Prostate gland (tissue), 2 donors: ENCODE measurements at regions of chr9 and their contacts with region 1.

Region 1: GRCh38 chr9:81394881-81395675 is 294.3 kb downstream of the TLE1 start:
- DNase-seq: no peak
- H3K4me3 ChIP-seq: no peak overlapping the region
- H3K27ac ChIP-seq: peak overlapping the region; percentile 57 to 70
- H3K4me1 ChIP-seq: no peaks in the 10 kb centered on the region
- H3K27me3 ChIP-seq: no peaks in the 10 kb centered on the region
- CTCF ChIP-seq: no peak
- POLR2A ChIP-seq: no peak

Region 2: GRCh38 chr9:80605129-80605528 is 789.9 kb before region 1 on chr9:
- intact Hi-C with region 1: loop called (anchors 10 kb)
- DNase-seq: no peak
- H3K4me3 ChIP-seq: no peak overlapping the region
- H3K27ac ChIP-seq: no peak overlapping the region
- H3K4me1 ChIP-seq: no peaks in the 10 kb centered on the region
- H3K27me3 ChIP-seq: no peaks in the 10 kb centered on the region
- CTCF ChIP-seq: peak in 3 of 4 experiments; percentile 25 to 34 (median 31)
- POLR2A ChIP-seq: no peak

Region 3: GRCh38 chr9:81492710-81493447 is 97.8 kb after region 1 on chr9:
- intact Hi-C with region 1: loop called (anchors 10 kb)
- DNase-seq: no peak
- H3K4me3 ChIP-seq: no peak overlapping the region
- H3K27ac ChIP-seq: no peak overlapping the region
- H3K4me1 ChIP-seq: no peaks in the 10 kb centered on the region
- H3K27me3 ChIP-seq: no peaks in the 10 kb centered on the region
- CTCF ChIP-seq: no peak
- POLR2A ChIP-seq: no peak

Region 4: DNA sequence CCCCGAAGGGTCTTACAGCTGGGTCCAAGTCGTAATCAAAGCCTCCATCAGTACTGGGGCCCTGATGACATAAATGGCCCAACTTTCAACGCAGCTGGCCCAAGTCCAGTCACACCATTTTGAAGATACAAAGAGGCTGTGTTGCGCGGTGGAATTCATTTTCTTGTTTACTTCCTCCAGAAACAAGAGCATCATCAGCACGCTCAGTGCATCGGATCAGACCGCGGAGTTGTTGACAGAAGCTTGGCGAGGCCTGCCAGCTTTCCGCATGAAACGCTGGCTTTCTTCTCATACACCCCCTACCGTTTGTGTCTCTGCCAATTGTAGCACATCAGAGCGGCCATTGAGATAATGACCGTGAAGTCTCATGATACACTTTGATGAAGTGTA is 431.4 kb after region 1 on chr9:
- intact Hi-C with region 1: loop called (anchors 10 kb)
- DNase-seq: no peak
- H3K4me3 ChIP-seq: no peak overlapping the region
- H3K27ac ChIP-seq: no peak overlapping the region
- H3K4me1 ChIP-seq: no peaks in the 10 kb centered on the region
- H3K27me3 ChIP-seq: no peaks in the 10 kb centered on the region
- CTCF ChIP-seq: no peak
- POLR2A ChIP-seq: no peak